Gastrocnemius medialis (tissue), 4 donors: ENCODE measurements at regions of chr9 and their contacts with region 1.

Region 1: GRCh38 chr9:6584881-6585597 is 60.5 kb downstream of the GLDC start:
- DNase-seq: no peak
- ATAC-seq: no peak
- H3K4me3 ChIP-seq: no peak overlapping the region
- H3K27ac ChIP-seq: no peak overlapping the region
- H3K4me1 ChIP-seq: no peaks in the 10 kb centered on the region
- H3K27me3 ChIP-seq: no peaks in the 10 kb centered on the region
- CTCF ChIP-seq: peak in 3 of 5 experiments; percentile 24 to 54 (median 44)
- POLR2A ChIP-seq: no peak

Region 2: GRCh38 chr9:6399071-6399470 is 186.0 kb before region 1 on chr9:
- in situ Hi-C with region 1: no loop called
- intact Hi-C with region 1: no loop called
- DNase-seq: no peak
- ATAC-seq: no peak
- H3K4me3 ChIP-seq: no peak overlapping the region
- H3K27ac ChIP-seq: no peak overlapping the region
- H3K4me1 ChIP-seq: no peaks in the 10 kb centered on the region
- H3K27me3 ChIP-seq: no peaks in the 10 kb centered on the region
- CTCF ChIP-seq: no peak
- POLR2A ChIP-seq: no peak

Region 3: GRCh38 chr9:6667633-6668280 is 82.7 kb after region 1 on chr9:
- in situ Hi-C with region 1: loop called in 2 of 4 experiments (anchors 10 kb)
- intact Hi-C with region 1: loop called (anchors 1 kb)
- DNase-seq: no peak
- ATAC-seq: peak in 1 of 2 donors; percentile 56
- H3K4me3 ChIP-seq: no peak overlapping the region
- H3K27ac ChIP-seq: no peak overlapping the region
- H3K4me1 ChIP-seq: no peaks in the 10 kb centered on the region
- H3K27me3 ChIP-seq: no peaks in the 10 kb centered on the region
- CTCF ChIP-seq: peak in 4 of 5 experiments; percentile 26 to 59 (median 38)
- POLR2A ChIP-seq: no peak

Region 4: GRCh38 chr9:6673326-6674025 is 88.4 kb after region 1 on chr9:
- in situ Hi-C with region 1: loop called in 2 of 4 experiments (anchors 10 kb)
- intact Hi-C with region 1: no loop called
- DNase-seq: no peak
- ATAC-seq: no peak
- H3K4me3 ChIP-seq: no peak overlapping the region
- H3K27ac ChIP-seq: no peak overlapping the region
- H3K4me1 ChIP-seq: no peaks in the 10 kb centered on the region
- H3K27me3 ChIP-seq: no peaks in the 10 kb centered on the region
- CTCF ChIP-seq: no peak
- POLR2A ChIP-seq: no peak